Left ventricle myocardium inferior (tissue), 1 donor: ENCODE measurements at regions of chr19 and their contacts with region 1.

Region 1: DNA sequence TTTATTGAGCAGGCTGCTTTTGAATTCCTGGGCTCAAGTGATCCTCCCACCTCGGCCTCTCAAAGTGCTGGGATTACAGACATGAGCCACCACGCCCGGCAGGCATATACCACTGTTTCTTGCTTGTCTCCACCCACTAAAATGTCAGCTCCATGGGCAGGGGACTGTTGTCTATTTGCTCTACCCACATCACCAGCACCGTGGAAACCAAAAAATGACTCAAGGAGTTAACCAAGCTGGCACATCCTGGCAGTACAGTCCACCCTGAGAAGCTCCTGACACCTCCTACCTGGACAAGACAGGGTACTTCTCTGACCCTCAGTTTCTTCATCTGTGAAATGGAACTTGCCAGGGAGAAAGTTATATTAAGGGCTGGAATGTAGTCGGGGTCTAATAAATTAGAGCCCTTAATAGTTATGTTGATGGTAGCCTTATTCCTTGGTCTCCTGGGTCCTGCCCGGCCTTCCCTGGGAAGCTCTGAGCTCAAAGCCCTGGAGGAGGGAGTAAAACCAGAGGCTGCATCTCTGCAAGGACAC is 13.9 kb downstream of the RDH8 start:
- DNase-seq: no peak
- H3K4me3 ChIP-seq: peak overlapping the region; percentile 15
- H3K27ac ChIP-seq: peak overlapping the region; percentile 57
- H3K4me1 ChIP-seq: peaks cover 6% of the 10 kb centered on the region
- H3K27me3 ChIP-seq: peaks cover 78% of the 10 kb centered on the region
- CTCF ChIP-seq: no peak

Region 2: GRCh38 chr19:9934132-9934950 is 92.9 kb before region 1 on chr19:
- intact Hi-C with region 1: loop called (anchors 5 kb)
- DNase-seq: peak; percentile 68
- H3K4me3 ChIP-seq: no peak overlapping the region
- H3K27ac ChIP-seq: peak overlapping the region; percentile 32
- H3K4me1 ChIP-seq: peaks cover 36% of the 10 kb centered on the region
- H3K27me3 ChIP-seq: peaks cover 96% of the 10 kb centered on the region
- CTCF ChIP-seq: peak; percentile 78

Region 3: GRCh38 chr19:10363789-10364281 is 336.6 kb after region 1 on chr19:
- intact Hi-C with region 1: no loop called
- DNase-seq: no peak
- H3K4me3 ChIP-seq: no peak overlapping the region
- H3K27ac ChIP-seq: no peak overlapping the region
- H3K4me1 ChIP-seq: no peaks in the 10 kb centered on the region
- H3K27me3 ChIP-seq: no peaks in the 10 kb centered on the region
- CTCF ChIP-seq: no peak